Activated T-helper 2 cell treated with anti-CD3 and anti-CD28 coated beads, Interferon-gamma antibody, Interleukin-2, Interleukin-4, amounts not matched to agents 10 μg/mL and 5 μg/mL and 100 μg/mL, durations not matched to agents 14 hours and 24 hours and 36 hours (primary cell): ENCODE measurements at regions of chr19 and their contacts with region 1.

Region 1: GRCh38 chr19:41521931-41522555 is 53.9 kb upstream of the CEACAM21 start:
- DNase-seq: no peak
- H3K4me3 Mint-ChIP-seq: peak overlapping the region; percentile 80
- H3K27ac Mint-ChIP-seq: peak overlapping the region; percentile 82
- H3K4me1 Mint-ChIP-seq: peaks cover 24% of the 10 kb centered on the region
- H3K27me3 Mint-ChIP-seq: peaks cover 39% of the 10 kb centered on the region

Region 2: DNA sequence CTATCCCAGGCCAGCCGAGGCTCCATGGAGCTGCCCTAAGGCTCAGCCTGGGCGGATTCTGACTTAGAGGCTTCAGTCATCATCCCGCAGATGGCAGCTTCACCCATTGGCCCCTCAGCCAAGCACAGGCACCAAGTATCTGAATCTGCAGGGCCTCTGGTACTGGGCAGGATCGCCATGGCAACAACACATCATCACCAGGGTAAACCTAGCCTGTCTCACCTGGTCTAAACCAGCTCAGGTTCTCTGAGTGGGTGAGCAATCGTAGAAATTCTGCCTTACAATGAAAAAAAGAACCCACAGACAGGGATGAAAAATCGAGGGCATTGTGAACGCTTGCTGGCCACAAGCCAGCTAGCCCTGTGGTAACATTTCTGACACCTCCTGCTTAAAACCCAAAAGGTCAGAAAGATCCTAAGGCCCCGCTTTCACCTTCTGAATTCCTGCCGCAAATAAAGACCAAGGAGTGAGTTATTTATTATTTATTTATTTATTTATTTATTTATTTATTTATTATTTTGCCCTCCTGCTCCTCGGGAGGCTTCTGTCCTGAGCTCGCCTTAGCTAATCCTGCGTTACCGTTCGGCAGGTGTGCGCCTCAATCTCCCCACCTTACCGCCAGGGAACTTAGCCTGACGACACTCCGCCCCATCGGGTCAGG is 41.9 kb after region 1 on chr19:
- intact Hi-C with region 1: loop called (anchors 5 kb)
- DNase-seq: no peak
- H3K4me3 Mint-ChIP-seq: peak overlapping the region; percentile 18
- H3K27ac Mint-ChIP-seq: no peak overlapping the region
- H3K4me1 Mint-ChIP-seq: peaks cover 34% of the 10 kb centered on the region
- H3K27me3 Mint-ChIP-seq: peaks cover 11% of the 10 kb centered on the region